ENCODE measurements at regions of chr1 and their contacts with region 1.

Region 1: DNA sequence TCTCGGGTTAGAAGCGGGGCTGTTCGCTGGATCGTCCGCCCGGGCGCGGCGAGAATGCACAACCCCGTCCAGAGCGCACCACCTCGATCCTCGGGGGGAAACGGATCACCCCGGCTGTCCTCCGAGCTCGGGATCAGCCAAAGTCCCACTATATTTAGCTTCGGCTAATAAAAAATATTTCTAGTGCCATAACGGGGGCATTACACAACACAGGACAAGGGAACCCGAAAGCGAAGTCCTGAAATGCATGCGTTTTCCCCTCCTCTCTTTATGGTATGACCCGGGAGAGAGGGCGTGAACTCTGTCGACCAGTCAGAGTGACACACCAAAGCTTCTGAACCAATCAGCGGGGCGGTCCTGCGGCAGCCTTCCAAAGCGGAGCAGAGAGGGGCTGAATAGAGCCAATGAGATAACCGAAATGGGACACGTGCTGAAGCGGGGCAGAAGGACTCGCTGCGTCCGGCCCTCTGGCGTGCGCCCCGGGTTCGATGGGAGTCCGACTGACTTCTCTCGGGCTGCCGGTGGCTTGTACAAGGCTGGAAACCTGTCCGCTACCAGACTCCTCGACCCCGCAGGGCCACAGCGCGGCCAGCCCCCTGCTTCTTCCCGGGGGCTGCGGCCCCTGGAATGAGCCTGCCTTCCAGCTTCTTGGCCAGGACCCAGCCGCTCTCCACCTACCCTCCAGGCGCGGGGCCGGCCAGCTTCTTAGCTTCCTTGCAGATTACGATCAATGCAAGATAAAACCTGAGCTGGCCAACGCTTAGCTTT is at the start of gene ALDH4A1:
- DNase-seq: peak; percentile 97 to 99 (median 98)
- ATAC-seq: peak; percentile 98
- H3K4me3 ChIP-seq: peak within 1 kb of the TSS; percentile 35 to 57
- H3K27ac ChIP-seq: peak within 1 kb of the TSS; percentile 79 to 89 (median 87)
- H3K4me1 ChIP-seq: peaks cover 35% of the 10 kb centered on the region
- H3K27me3 ChIP-seq: no peaks in the 10 kb centered on the region
- CTCF ChIP-seq: peak in 1 of 7 experiments; percentile 5
- POLR2A ChIP-seq: peak in 2 of 3 donors; percentile 58 to 62
- total RNA-seq, gene ALDH4A1: 4.7 to 15.5 TPM

Region 2: GRCh38 chr1:18956369-18957135 is 53.8 kb after region 1 on chr1 and contains the start of gene IFFO2:
- intact Hi-C with region 1: loop called (anchors 10 kb)
- DNase-seq: peak; percentile 98 to 99 (median 99)
- ATAC-seq: peak; percentile 91
- H3K4me3 ChIP-seq: peak within 1 kb of the TSS; percentile 49 to 76
- H3K27ac ChIP-seq: peak within 1 kb of the TSS; percentile 77 to 87 (median 83)
- H3K4me1 ChIP-seq: peaks cover 58% of the 10 kb centered on the region
- H3K27me3 ChIP-seq: no peaks in the 10 kb centered on the region
- CTCF ChIP-seq: peak in 1 of 7 experiments; percentile 11
- POLR2A ChIP-seq: peak; percentile 89 to 92 (median 92)
- total RNA-seq, gene IFFO2: 23.1 to 219 TPM

Region 3: DNA sequence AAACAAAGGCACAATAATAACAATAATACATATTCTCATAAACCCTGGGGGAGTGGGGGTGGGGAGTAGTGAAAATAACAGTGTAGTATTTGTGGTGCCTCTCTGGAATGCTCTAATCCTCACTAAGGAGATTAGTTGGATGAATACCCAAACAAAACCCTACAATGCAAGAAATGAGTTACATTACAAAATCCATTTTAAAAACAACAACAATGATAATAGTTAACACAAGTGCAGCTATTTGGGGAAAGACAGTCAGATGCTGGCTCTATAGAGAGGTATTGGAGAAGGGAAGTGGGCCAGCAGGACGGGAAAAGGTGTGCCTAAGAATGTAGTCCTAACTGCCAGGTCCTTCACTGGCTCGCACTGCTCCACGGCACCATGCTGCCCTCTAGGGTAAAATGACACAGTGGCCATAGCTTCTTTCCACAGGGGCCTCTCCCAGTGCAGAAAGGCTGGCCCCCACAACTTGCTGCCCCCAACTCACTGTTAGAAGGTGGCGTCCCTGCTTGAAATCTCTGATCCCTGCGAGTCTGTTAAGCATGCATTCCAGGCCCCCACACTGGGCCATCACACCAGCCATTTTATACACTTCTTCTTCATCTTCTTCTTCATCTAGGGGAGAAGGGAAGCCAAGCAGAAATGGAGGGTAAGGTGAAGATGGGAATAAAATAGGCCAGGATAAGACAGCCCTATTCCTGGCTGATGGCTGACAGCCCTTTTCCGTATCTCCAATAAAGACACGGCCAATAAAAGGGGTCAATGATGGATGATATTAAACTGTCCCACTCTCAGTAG is 193.5 kb after region 1 on chr1:
- intact Hi-C with region 1: loop called (anchors 5 kb)
- DNase-seq: peak; percentile 69 to 75 (median 72)
- ATAC-seq: peak; percentile 83
- H3K4me3 ChIP-seq: no peak overlapping the region
- H3K27ac ChIP-seq: peak overlapping the region in 1 of 4 donors; percentile 20
- H3K4me1 ChIP-seq: peaks cover 11% of the 10 kb centered on the region
- H3K27me3 ChIP-seq: no peaks in the 10 kb centered on the region
- CTCF ChIP-seq: peak; percentile 36 to 82 (median 73)
- POLR2A ChIP-seq: no peak

Region 4: GRCh38 chr1:19109545-19109944 is 206.8 kb after region 1 on chr1:
- intact Hi-C with region 1: loop called (anchors 5 kb)
- DNase-seq: no peak
- ATAC-seq: no peak
- H3K4me3 ChIP-seq: no peak overlapping the region
- H3K27ac ChIP-seq: no peak overlapping the region
- H3K4me1 ChIP-seq: no peaks in the 10 kb centered on the region
- H3K27me3 ChIP-seq: no peaks in the 10 kb centered on the region
- CTCF ChIP-seq: no peak
- POLR2A ChIP-seq: no peak